CD4-positive, alpha-beta memory T cell (primary cell): ENCODE measurements at regions of chr1 and their contacts with region 1.

Region 1: DNA sequence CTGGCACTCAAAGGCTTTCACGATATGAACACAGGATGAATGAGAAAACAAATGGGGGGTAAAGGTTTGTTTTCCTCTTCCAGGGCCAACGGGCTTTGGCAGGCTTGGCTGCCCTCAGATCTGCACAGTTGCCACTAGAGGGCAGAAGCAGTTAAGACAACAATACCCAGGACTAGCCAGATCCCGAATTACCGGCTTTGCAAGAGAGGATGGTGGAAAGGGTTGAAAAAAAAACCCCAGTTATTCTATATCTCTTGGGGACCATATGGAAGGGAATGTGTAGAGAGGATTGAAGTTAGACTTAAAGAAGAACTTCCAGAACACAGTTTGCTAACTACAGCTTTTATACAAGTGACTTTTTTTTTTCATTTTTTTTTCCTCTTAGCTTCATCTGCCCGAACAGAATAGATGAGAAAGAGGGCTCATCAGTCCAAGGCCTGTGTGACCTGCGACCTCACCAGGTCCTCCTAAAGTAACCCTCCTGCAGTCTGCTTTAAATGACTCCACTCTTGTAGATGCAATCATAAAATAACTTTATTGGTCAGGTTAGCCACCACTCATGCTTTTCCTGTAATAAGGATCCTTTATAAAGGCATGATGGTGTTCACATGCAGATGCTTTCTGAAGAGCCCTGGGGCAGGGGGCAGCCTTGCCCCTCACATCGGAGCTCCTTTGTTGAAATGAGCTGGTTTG is 10.7 kb downstream of the FMOD start:
- DNase-seq: peak; percentile 61 to 68 (median 63)
- H3K4me3 ChIP-seq: no peak overlapping the region
- H3K4me3 Mint-ChIP-seq: peak overlapping the region in 1 of 8 donors; percentile 6
- H3K27ac ChIP-seq: no peak overlapping the region
- H3K27ac Mint-ChIP-seq: peak overlapping the region in 6 of 7 donors; percentile 1 to 78 (median 48)
- H3K4me1 ChIP-seq: peaks cover 16% of the 10 kb centered on the region
- H3K4me1 Mint-ChIP-seq: peaks cover 23 to 36% (median 28%) of the 10 kb centered on the region in 4 donors
- H3K27me3 ChIP-seq: peaks cover 8% of the 10 kb centered on the region
- H3K27me3 Mint-ChIP-seq: peaks cover 4 to 26% of the 10 kb centered on the region in 2 donors

Region 2: GRCh38 chr1:203290261-203291089 is 49.8 kb before region 1 on chr1:
- CTCF ChIA-PET with region 1: interaction called, 145 read pairs
- POLR2A ChIA-PET with region 1: interaction called, 87 read pairs
- intact Hi-C with region 1: no loop called
- DNase-seq: peak; percentile 96 to 98 (median 97)
- H3K4me3 ChIP-seq: peak overlapping the region; percentile 11 to 65
- H3K4me3 Mint-ChIP-seq: peak overlapping the region; percentile 75 to 89 (median 84)
- H3K27ac ChIP-seq: peak overlapping the region; percentile 97
- H3K27ac Mint-ChIP-seq: peak overlapping the region; percentile 98 to 100 (median 100)
- H3K4me1 ChIP-seq: peaks cover 61% of the 10 kb centered on the region
- H3K4me1 Mint-ChIP-seq: peaks cover 48 to 69% (median 58%) of the 10 kb centered on the region in 4 donors
- H3K27me3 ChIP-seq: no peaks in the 10 kb centered on the region
- H3K27me3 Mint-ChIP-seq: no peaks in the 10 kb centered on the region

Region 3: GRCh38 chr1:203326830-203327683 is 13.2 kb before region 1 on chr1:
- CTCF ChIA-PET with region 1: interaction called, 236 read pairs
- POLR2A ChIA-PET with region 1: interaction called, 207 read pairs
- intact Hi-C with region 1: loop called (anchors 1 kb)
- DNase-seq: peak; percentile 95 to 96 (median 95)
- H3K4me3 ChIP-seq: peak overlapping the region; percentile 15 to 64
- H3K4me3 Mint-ChIP-seq: peak overlapping the region; percentile 79 to 91 (median 86)
- H3K27ac ChIP-seq: peak overlapping the region; percentile 97
- H3K27ac Mint-ChIP-seq: peak overlapping the region; percentile 91 to 99 (median 98)
- H3K4me1 ChIP-seq: peaks cover 64% of the 10 kb centered on the region
- H3K4me1 Mint-ChIP-seq: peaks cover 49 to 73% (median 60%) of the 10 kb centered on the region in 4 donors
- H3K27me3 ChIP-seq: no peaks in the 10 kb centered on the region
- H3K27me3 Mint-ChIP-seq: no peaks in the 10 kb centered on the region

Region 4: DNA sequence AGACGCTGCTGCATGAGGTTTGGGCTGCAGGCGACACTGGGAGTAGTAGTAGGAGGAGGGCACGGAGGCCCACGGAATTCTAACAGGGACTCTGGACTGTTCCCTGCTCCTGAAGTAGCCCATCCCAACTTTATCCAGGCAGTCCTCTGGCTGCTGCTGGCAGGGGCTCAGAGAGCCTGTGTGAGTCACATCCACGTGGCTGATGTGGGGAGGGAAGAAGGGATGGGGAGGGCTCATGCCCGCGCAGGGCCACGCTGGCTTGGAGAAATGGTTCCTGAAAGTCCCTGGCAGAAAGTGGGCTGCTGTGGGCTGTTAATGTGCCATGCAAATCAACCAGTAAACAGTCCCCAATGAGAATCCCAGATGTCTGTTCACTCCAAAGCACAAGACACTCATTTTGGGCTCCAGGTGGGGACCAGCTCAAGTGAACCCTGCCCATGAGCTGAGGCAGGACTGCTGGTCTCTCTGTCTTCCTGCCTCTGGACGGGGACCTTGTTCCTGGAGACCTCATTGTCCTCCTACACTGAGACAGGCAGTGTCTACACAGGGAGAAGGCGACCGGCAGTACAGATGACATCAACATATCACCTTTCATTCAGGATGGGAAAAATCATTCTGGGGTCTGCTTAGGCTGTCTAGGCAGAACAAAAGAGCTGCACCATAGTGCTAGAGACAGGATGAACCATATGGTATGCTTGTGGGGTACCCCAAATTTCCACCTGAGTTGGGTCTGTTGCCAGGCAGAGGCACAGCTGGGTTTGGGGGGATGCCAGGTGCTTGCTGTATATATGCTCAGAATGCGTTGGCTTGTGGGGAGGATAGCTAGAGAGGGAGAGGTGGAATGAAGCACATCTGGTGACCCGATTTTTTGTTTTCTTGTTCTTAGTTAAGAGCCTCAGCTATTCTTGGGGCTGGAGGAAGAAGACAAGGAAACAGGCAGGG is 68.5 kb after region 1 on chr1:
- CTCF ChIA-PET with region 1: no interaction called
- POLR2A ChIA-PET with region 1: no interaction called
- intact Hi-C with region 1: no loop called
- DNase-seq: no peak
- H3K4me3 ChIP-seq: no peak overlapping the region
- H3K4me3 Mint-ChIP-seq: no peak overlapping the region
- H3K27ac ChIP-seq: no peak overlapping the region
- H3K27ac Mint-ChIP-seq: no peak overlapping the region
- H3K4me1 ChIP-seq: no peaks in the 10 kb centered on the region
- H3K4me1 Mint-ChIP-seq: no peaks in the 10 kb centered on the region
- H3K27me3 ChIP-seq: peaks cover 15% of the 10 kb centered on the region
- H3K27me3 Mint-ChIP-seq: peaks cover 36 to 46% of the 10 kb centered on the region in 2 donors

Region 5: GRCh38 chr1:203486618-203487370 is 146.5 kb after region 1 on chr1:
- CTCF ChIA-PET with region 1: interaction called, 157 read pairs
- POLR2A ChIA-PET with region 1: interaction called, 7 read pairs
- intact Hi-C with region 1: loop called (anchors 1 kb)
- DNase-seq: no peak
- H3K4me3 ChIP-seq: no peak overlapping the region
- H3K4me3 Mint-ChIP-seq: peak overlapping the region; percentile 79 to 86 (median 84)
- H3K27ac ChIP-seq: no peak overlapping the region
- H3K27ac Mint-ChIP-seq: peak overlapping the region in 4 of 7 donors; percentile 42 to 89 (median 76)
- H3K4me1 ChIP-seq: peaks cover 13% of the 10 kb centered on the region
- H3K4me1 Mint-ChIP-seq: peaks cover 1 to 22% (median 11%) of the 10 kb centered on the region in 4 donors
- H3K27me3 ChIP-seq: peaks cover 4% of the 10 kb centered on the region
- H3K27me3 Mint-ChIP-seq: peaks cover 2 to 4% of the 10 kb centered on the region in 2 donors

Region 6: DNA sequence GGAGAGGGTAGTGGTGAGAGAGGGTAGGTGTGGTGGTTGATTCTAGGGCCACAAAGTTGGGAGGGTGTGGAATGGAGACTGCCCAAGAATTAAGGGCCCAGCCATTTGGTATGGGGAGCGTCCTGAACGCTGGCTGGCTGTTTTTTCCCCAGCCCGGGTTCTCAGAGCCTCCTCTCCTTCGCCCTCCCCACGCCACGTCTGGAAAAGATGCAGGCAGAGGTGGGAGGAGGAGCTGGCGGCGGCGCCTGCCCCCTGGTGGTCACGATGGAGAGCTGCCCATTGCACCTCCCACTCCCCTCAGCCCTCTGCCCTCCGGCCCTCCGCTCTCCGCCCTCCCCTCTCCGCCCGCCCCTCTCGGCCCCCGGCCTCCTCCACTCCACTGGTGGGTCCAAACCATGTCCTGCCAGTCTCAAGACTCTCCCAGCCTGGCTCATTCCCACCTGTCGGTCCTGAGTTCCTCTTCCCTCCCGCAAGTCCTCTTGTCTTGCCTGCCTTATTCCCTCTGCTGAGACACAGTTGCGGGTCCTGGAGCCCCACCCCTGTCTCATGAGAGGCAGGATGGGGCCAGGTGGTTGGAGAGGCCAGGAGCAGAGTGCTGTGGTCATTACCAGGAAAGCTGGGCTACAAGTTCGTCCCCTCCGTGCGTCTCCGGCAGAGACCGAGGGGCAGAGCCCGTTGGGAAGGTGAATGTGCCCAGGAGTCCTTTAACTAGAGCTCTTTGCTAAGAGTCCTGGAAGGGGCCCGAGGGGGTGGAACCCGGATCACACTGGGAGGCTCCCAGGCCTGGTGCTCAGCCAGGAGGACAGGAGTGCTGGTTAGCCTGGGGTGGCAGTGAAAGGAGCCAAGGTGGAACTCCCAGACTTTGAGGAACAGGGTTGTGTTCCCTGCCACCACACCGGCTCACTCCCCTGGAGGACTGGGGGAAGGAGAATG is 789.0 kb after region 1 on chr1:
- CTCF ChIA-PET with region 1: interaction called, 3 read pairs
- POLR2A ChIA-PET with region 1: no interaction called
- intact Hi-C with region 1: loop called (anchors 10 kb)
- DNase-seq: peak; percentile 55 to 65 (median 59)
- H3K4me3 ChIP-seq: no peak overlapping the region
- H3K4me3 Mint-ChIP-seq: peak overlapping the region in 2 of 8 donors; percentile 36 to 46
- H3K27ac ChIP-seq: no peak overlapping the region
- H3K27ac Mint-ChIP-seq: peak overlapping the region in 4 of 7 donors; percentile 27 to 75 (median 44)
- H3K4me1 ChIP-seq: peaks cover 9% of the 10 kb centered on the region
- H3K4me1 Mint-ChIP-seq: peaks cover 5 to 14% (median 10%) of the 10 kb centered on the region in 4 donors
- H3K27me3 ChIP-seq: no peaks in the 10 kb centered on the region
- H3K27me3 Mint-ChIP-seq: peaks cover 0 to 1% of the 10 kb centered on the region in 2 donors